Activated T-helper 2 cell treated with anti-CD3 and anti-CD28 coated beads, Interferon-gamma antibody, Interleukin-2, Interleukin-4, amounts not matched to agents 10 μg/mL and 5 μg/mL and 100 μg/mL, durations not matched to agents 14 hours and 24 hours and 36 hours (primary cell): ENCODE measurements at regions of chr14 and their contacts with region 1.

Region 1: GRCh38 chr14:34043627-34044372 is 92.9 kb upstream of the EGLN3 start:
- DNase-seq: peak; percentile 83
- H3K4me3 Mint-ChIP-seq: peak overlapping the region; percentile 61
- H3K27ac Mint-ChIP-seq: peak overlapping the region; percentile 82
- H3K4me1 Mint-ChIP-seq: peaks cover 68% of the 10 kb centered on the region
- H3K27me3 Mint-ChIP-seq: no peaks in the 10 kb centered on the region

Region 2: GRCh38 chr14:34012978-34013720 is 30.7 kb before region 1 on chr14:
- intact Hi-C with region 1: loop called (anchors 1 kb)
- DNase-seq: no peak
- H3K4me3 Mint-ChIP-seq: no peak overlapping the region
- H3K27ac Mint-ChIP-seq: peak overlapping the region; percentile 81
- H3K4me1 Mint-ChIP-seq: peaks cover 37% of the 10 kb centered on the region
- H3K27me3 Mint-ChIP-seq: peaks cover 3% of the 10 kb centered on the region

Region 3: DNA sequence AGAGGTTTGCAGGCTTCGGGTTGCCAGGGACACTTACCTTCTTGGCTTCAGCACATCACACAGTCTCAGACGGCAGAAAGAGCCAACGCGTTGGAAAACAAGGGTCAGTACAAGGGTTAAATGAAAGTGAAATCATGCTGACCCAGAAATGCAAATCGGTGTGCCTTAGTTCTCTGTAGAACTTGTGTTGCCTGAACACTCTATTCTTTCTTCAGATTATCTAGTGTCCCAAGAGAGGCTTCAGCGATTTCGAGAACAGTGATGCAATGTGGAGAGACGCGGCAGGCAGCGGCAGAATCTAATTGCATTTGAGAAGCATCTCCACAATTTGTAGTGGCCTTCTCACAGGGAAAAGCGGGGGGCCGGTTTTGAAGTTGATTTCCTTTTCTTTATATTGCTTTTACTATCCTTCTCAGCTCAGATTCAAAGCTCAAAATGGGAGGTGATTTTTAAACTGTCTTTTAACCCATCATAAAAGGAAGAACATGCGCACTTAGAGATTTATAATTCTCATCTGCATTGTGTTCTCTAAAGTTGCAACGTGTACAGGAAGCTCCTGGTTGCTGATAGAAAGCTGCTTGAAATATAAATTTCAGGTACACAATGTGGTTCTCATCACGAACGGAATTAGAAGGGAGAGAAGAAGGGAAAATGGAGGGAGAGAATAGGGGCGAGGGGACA is 25.1 kb before region 1 on chr14:
- intact Hi-C with region 1: loop called (anchors 1 kb)
- DNase-seq: peak; percentile 9
- H3K4me3 Mint-ChIP-seq: peak overlapping the region; percentile 82
- H3K27ac Mint-ChIP-seq: peak overlapping the region; percentile 93
- H3K4me1 Mint-ChIP-seq: peaks cover 34% of the 10 kb centered on the region
- H3K27me3 Mint-ChIP-seq: no peaks in the 10 kb centered on the region

Region 4: DNA sequence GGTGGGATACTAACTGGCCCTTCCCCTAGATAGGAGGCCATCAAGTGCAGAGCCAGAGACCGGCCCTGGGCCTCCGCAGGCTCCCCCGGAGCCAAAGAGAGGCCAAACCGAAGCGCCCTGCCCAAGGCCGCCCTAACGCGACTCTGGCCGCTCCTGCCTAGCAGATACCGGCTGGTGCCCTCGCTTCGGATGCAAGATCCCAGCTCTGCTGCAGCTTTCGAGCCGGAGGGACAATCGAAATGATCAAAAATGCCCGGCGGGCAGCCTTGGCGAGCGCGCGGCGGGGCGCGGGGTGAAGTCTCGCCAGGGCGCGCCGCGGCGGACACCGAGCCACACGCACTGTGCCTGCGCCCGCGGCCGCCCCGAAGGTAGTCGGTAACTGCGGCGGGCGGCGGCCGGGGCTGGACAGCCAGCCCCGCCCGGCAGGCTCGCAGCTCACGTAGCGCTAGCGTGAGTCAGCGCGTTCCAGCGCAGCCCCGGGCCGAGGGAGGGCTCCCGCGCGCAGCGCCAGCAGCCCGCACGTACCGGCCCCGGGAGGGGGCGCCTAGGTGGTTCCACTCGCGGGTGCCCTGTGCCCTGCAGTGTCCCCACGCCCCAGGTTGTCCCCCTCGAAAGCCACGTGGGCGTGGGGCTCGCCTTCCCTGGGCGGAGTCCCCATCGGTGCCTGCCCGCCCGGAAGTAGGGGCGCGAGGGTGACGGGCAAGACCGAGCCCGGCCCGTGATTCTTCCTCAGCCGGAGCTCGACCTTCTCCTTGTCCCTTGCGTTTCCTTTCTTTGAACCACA is 16.2 kb after region 1 on chr14:
- intact Hi-C with region 1: loop called (anchors 2 kb)
- DNase-seq: peak; percentile 59
- H3K4me3 Mint-ChIP-seq: peak overlapping the region; percentile 83
- H3K27ac Mint-ChIP-seq: peak overlapping the region; percentile 86
- H3K4me1 Mint-ChIP-seq: peaks cover 40% of the 10 kb centered on the region
- H3K27me3 Mint-ChIP-seq: peaks cover 20% of the 10 kb centered on the region

Region 5: DNA sequence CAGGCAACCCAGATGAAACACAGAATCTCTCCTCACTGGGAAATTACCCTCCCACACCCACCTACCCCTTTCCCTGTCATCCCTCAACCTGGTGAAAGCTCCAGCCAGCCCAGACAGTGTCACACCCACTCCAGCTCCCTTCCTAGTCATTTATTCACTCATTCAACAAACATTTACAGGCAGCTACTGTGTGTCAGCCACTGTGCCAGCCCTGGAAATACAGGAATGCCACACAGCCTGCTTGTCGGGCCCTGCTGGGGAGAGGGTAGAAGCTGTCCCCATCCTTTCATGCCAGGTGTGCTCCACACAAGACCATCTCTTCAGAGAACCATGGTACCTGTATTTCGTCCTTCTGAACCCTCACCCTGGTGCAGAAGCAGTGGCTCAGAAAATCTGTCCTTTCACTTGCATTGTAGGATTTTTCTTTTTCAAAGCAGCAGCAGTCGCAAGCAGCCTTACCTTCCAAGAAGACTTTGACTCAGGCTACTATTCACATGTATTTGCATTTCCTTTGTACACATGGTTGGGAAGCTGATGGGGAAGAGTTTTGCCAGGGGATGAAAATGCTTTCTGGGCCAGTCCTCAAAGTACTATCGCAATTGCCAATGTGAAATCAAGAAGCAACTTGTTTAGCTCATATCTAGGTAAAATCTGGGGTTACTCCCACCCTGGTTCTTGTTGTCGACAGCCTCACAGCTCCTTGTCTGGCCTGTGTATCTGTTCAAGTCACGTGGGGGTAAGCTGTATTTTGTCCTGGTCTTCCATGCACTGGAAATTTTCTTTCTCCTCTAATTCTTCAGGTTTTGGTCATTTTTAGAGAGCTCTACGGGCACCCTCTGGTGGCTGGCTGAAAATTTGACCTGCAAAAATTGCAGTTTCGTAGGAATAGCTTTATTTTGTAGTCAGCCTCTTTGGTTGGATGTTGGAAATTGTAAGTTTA is 54.5 kb after region 1 on chr14:
- intact Hi-C with region 1: loop called (anchors 2 kb)
- DNase-seq: peak; percentile 14
- H3K4me3 Mint-ChIP-seq: no peak overlapping the region
- H3K27ac Mint-ChIP-seq: no peak overlapping the region
- H3K4me1 Mint-ChIP-seq: peaks cover 57% of the 10 kb centered on the region
- H3K27me3 Mint-ChIP-seq: peaks cover 2% of the 10 kb centered on the region

Region 6: GRCh38 chr14:34220921-34221320 is 177.1 kb after region 1 on chr14:
- intact Hi-C with region 1: loop called (anchors 5 kb)
- DNase-seq: peak; percentile 19
- H3K4me3 Mint-ChIP-seq: no peak overlapping the region
- H3K27ac Mint-ChIP-seq: peak overlapping the region; percentile 15
- H3K4me1 Mint-ChIP-seq: peaks cover 18% of the 10 kb centered on the region
- H3K27me3 Mint-ChIP-seq: peaks cover 15% of the 10 kb centered on the region

Region 7: DNA sequence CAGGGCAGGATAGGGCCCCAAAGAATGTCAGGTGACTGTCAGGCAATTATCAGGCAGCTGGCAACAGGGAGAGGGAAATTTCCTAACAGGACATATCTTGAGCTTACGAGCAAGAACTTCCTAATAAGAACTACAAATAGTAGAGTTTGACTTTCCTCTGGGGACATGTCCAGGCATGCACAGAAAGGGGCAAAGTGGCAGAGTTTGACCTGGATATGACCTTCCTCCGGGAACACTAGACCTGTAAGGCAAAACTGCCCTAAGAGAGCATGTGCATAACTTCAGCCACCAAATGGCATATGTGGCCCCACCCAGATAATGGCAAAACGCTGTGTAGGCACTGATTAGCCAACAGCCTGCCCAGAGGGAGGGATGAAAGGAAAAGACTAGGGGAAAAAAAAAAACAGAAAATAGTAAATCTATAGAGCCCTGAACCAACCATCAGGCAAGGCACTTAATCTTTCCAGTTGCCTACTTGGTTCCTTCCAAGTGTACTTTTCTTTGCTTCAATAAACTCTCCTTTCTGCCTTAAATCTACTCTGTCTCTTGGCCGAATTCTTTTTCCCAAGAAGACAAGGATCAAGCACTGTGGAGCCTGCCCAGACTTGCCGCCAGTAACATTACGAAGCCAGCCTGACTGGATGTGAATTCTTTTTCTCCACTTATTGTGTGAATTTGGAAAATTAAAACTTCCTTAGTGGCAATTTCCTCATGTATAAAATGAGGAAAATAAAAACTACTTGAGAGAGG is 254.1 kb after region 1 on chr14:
- intact Hi-C with region 1: no loop called
- DNase-seq: no peak
- H3K4me3 Mint-ChIP-seq: no peak overlapping the region
- H3K27ac Mint-ChIP-seq: no peak overlapping the region
- H3K4me1 Mint-ChIP-seq: no peaks in the 10 kb centered on the region
- H3K27me3 Mint-ChIP-seq: no peaks in the 10 kb centered on the region